Endothelial cell of umbilical vein (primary cell): ENCODE measurements at regions of chr3 and their contacts with region 1.

Region 1: DNA sequence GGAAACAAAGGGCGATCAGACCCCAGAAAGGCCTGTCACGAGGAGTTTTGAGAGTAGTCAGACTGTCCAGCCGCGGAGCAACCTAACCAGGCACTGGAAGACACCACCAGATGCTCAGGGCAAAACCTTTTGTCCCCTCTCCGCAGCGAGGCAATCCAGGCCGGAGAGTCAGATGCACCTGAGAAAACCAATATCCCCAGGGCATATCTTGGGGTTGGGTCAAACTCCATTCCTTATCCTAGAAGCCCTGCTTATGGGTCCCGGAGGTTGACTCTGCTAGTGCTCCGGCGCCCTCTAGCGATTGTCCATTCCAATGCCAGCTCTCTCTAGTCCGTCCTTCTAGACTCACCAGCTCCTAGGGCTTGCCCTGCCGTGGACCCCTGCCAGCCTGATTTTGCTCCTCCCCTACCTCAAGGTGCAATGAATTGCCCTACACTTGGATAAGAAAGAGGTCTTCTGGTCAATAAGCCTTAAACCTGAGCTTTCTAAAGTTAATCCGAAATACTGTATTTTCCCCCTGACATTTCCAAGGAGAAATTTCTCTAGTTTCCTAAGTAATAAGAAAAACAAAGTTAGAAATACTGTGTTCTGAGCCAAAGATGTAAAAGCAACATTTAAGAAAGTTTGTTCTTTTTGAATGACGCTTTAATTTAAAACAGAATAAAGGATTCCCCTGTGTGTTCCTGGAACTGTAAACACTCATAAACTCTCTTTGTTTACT is 5.5 kb downstream of the CPNE4 start:
- DNase-seq: peak; percentile 73
- H3K4me3 ChIP-seq: no peak overlapping the region
- H3K27ac ChIP-seq: no peak overlapping the region
- H3K4me1 ChIP-seq: no peaks in the 10 kb centered on the region
- H3K27me3 ChIP-seq: peaks cover 20 to 26% of the 10 kb centered on the region in 2 experiments
- CTCF ChIP-seq: peak; percentile 69 to 94
- POLR2A ChIP-seq: no peak

Region 2: GRCh38 chr3:131053043-131053859 is 976.1 kb before region 1 on chr3:
- CTCF ChIA-PET with region 1: no interaction called
- POLR2A ChIA-PET with region 1: no interaction called
- dilution Hi-C with region 1: no loop called
- intact Hi-C with region 1: loop called (anchors 1 kb)
- DNase-seq: peak; percentile 11
- H3K4me3 ChIP-seq: no peak overlapping the region
- H3K27ac ChIP-seq: no peak overlapping the region
- H3K4me1 ChIP-seq: no peaks in the 10 kb centered on the region
- H3K27me3 ChIP-seq: no peaks in the 10 kb centered on the region
- CTCF ChIP-seq: peak in 1 of 2 donors; percentile 6
- POLR2A ChIP-seq: no peak

Region 3: GRCh38 chr3:131549340-131549739 is 480.0 kb before region 1 on chr3:
- CTCF ChIA-PET with region 1: interaction called, 6 read pairs
- POLR2A ChIA-PET with region 1: no interaction called
- dilution Hi-C with region 1: no loop called
- intact Hi-C with region 1: loop called (anchors 5 kb)
- DNase-seq: no peak
- H3K4me3 ChIP-seq: no peak overlapping the region
- H3K27ac ChIP-seq: no peak overlapping the region
- H3K4me1 ChIP-seq: no peaks in the 10 kb centered on the region
- H3K27me3 ChIP-seq: peaks cover 4 to 6% of the 10 kb centered on the region in 2 experiments
- CTCF ChIP-seq: peak; percentile 20 to 28
- POLR2A ChIP-seq: no peak

Region 4: DNA sequence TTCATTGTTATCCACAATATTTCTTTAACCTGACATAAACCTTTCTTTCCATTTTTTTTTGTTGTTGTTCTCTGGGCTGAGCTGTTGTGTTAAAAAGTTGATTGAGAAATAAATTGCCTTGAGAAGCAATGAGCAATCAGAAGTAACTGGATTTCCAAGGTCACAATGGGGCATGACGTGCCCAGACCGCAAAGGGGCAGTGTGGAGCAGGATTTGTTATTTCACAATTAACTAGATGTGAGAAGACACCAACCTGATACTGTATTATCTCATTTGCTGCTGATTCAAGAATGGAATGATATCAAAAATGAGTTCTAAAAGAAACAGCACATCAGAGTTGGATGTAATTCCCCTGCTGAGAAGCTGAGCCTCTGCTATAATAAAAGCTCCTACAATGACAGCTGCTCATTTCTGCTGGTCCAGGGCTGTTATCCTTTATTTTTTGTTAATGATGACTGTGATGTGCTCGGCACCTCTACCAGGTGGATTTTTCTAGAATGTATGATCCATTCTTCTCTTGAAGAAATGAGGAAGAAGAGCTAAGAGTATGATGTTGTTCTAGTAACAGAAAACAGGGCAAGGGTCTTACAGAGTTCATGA is 22.6 kb before region 1 on chr3:
- CTCF ChIA-PET with region 1: interaction called, 42 read pairs
- POLR2A ChIA-PET with region 1: no interaction called
- dilution Hi-C with region 1: no loop called
- intact Hi-C with region 1: no loop called
- DNase-seq: peak; percentile 50
- H3K4me3 ChIP-seq: no peak overlapping the region
- H3K27ac ChIP-seq: no peak overlapping the region
- H3K4me1 ChIP-seq: no peaks in the 10 kb centered on the region
- H3K27me3 ChIP-seq: peaks cover 5 to 8% of the 10 kb centered on the region in 2 experiments
- CTCF ChIP-seq: peak; percentile 58 to 65
- POLR2A ChIP-seq: no peak

Region 5: GRCh38 chr3:132071043-132071442 is 41.7 kb after region 1 on chr3:
- CTCF ChIA-PET with region 1: no interaction called
- POLR2A ChIA-PET with region 1: no interaction called
- dilution Hi-C with region 1: no loop called
- intact Hi-C with region 1: no loop called
- DNase-seq: no peak
- H3K4me3 ChIP-seq: no peak overlapping the region
- H3K27ac ChIP-seq: no peak overlapping the region
- H3K4me1 ChIP-seq: no peaks in the 10 kb centered on the region
- H3K27me3 ChIP-seq: no peaks in the 10 kb centered on the region
- CTCF ChIP-seq: no peak
- POLR2A ChIP-seq: no peak

Region 6: GRCh38 chr3:132180337-132180791 is 151.0 kb after region 1 on chr3:
- CTCF ChIA-PET with region 1: interaction called, 17 read pairs
- POLR2A ChIA-PET with region 1: no interaction called
- dilution Hi-C with region 1: no loop called
- intact Hi-C with region 1: no loop called
- DNase-seq: peak; percentile 62
- H3K4me3 ChIP-seq: no peak overlapping the region
- H3K27ac ChIP-seq: no peak overlapping the region
- H3K4me1 ChIP-seq: no peaks in the 10 kb centered on the region
- H3K27me3 ChIP-seq: peaks cover 9 to 22% of the 10 kb centered on the region in 2 experiments
- CTCF ChIP-seq: peak; percentile 37 to 42
- POLR2A ChIP-seq: no peak

Region 7: GRCh38 chr3:132456571-132456970 is 427.2 kb after region 1 on chr3:
- CTCF ChIA-PET with region 1: no interaction called
- POLR2A ChIA-PET with region 1: no interaction called
- dilution Hi-C with region 1: no loop called
- intact Hi-C with region 1: no loop called
- DNase-seq: no peak
- H3K4me3 ChIP-seq: no peak overlapping the region
- H3K27ac ChIP-seq: no peak overlapping the region
- H3K4me1 ChIP-seq: no peaks in the 10 kb centered on the region
- H3K27me3 ChIP-seq: no peaks in the 10 kb centered on the region
- CTCF ChIP-seq: no peak
- POLR2A ChIP-seq: no peak